GM12878 (cell line): ENCODE measurements at regions of chr10 and their contacts with region 1.

Region 1: DNA sequence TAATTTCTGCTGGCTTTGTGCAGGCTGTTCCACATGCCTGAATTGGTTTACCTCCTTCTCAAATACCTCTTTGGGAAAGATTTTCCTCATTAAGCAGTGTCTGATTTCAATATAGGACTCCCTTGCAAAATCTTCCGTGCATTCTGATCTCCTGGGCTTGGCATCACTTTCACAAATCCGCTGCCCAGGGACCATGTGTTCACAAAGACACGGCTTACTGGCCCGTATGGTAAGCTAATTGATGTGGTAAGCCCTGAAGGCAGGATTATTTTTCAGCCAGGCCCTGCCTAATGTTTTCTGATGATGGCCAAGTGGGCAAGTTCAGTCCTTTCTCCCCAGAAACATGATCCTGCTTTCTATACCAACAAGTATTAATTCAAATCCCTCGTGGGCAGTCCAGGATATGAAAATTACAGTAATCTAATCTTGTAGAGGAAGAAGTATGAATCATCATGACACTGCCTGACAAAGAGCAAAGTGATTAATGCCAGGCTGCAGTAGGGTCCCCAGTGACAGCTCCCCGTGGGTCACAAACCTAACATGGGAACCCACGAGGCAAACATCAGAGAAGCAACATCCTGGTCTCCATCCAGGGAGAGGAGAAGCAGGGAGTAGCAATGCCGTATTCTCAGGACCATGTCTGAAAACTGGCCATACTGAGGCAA is 11.6 kb upstream of the SVIL start:
- DNase-seq: no peak
- ATAC-seq: peak; percentile 23
- H3K4me3 ChIP-seq: no peak overlapping the region
- H3K27ac ChIP-seq: no peak overlapping the region
- H3K4me1 ChIP-seq: no peaks in the 10 kb centered on the region
- H3K27me3 ChIP-seq: no peaks in the 10 kb centered on the region
- CTCF ChIP-seq: no peak
- EP300 ChIP-seq: no peak
- POLR2A ChIP-seq: no peak
- RAD21 ChIP-seq: no peak

Region 2: GRCh38 chr10:29627201-29628141 is 18.9 kb before region 1 on chr10:
- CTCF ChIA-PET with region 1: interaction called, 3 read pairs
- POLR2A ChIA-PET with region 1: interaction called, 6 read pairs
- RAD21 ChIA-PET with region 1: interaction called, 5 read pairs
- SMC1A ChIA-PET with region 1: interaction called, 15 read pairs
- in situ Hi-C with region 1: no loop called
- intact Hi-C with region 1: no loop called
- DNase-seq: no peak
- ATAC-seq: no peak
- H3K4me3 ChIP-seq: no peak overlapping the region
- H3K27ac ChIP-seq: no peak overlapping the region
- H3K4me1 ChIP-seq: no peaks in the 10 kb centered on the region
- H3K27me3 ChIP-seq: no peaks in the 10 kb centered on the region
- CTCF ChIP-seq: no peak
- EP300 ChIP-seq: no peak
- POLR2A ChIP-seq: no peak
- RAD21 ChIP-seq: no peak

Region 3: DNA sequence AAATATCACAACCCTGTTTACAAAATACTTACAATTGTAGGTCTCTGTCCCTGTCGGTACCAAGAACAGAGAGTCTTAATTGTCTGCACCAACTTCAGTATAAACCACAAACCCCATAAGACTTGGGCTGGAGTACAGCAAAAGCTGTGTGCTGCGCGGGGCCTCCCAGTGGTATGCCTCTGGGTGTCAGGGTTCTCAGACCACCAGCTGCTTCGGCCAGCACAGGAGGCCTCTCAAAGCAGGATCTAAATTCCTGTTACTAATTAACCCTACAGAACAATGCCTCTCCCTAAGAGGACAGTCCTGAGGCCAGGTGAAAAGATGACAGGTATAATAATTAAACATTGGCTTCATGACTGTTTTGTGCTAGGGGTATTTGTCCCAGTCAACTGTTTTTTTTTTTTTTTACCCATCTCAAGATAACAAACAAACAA is 10.6 kb before region 1 on chr10:
- CTCF ChIA-PET with region 1: interaction called, 5 read pairs
- POLR2A ChIA-PET with region 1: interaction called, 11 read pairs
- RAD21 ChIA-PET with region 1: interaction called, 8 read pairs
- SMC1A ChIA-PET with region 1: interaction called, 12 read pairs
- in situ Hi-C with region 1: no loop called
- intact Hi-C with region 1: no loop called
- DNase-seq: peak; percentile 27
- ATAC-seq: peak; percentile 86
- H3K4me3 ChIP-seq: no peak overlapping the region
- H3K27ac ChIP-seq: no peak overlapping the region
- H3K4me1 ChIP-seq: no peaks in the 10 kb centered on the region
- H3K27me3 ChIP-seq: no peaks in the 10 kb centered on the region
- CTCF ChIP-seq: no peak
- EP300 ChIP-seq: no peak
- POLR2A ChIP-seq: no peak
- RAD21 ChIP-seq: no peak

Region 4: GRCh38 chr10:29658984-29659965 is 12.9 kb after region 1 on chr10:
- CTCF ChIA-PET with region 1: interaction called, 6 read pairs
- POLR2A ChIA-PET with region 1: interaction called, 7 read pairs
- RAD21 ChIA-PET with region 1: interaction called, 4 read pairs
- SMC1A ChIA-PET with region 1: interaction called, 18 read pairs
- in situ Hi-C with region 1: no loop called
- intact Hi-C with region 1: no loop called
- DNase-seq: peak; percentile 92
- ATAC-seq: peak; percentile 97
- H3K4me3 ChIP-seq: no peak overlapping the region
- H3K27ac ChIP-seq: no peak overlapping the region
- H3K4me1 ChIP-seq: no peaks in the 10 kb centered on the region
- H3K27me3 ChIP-seq: no peaks in the 10 kb centered on the region
- CTCF ChIP-seq: no peak
- EP300 ChIP-seq: peak; percentile 88 to 97; a peak in 3 of 4 replicates
- POLR2A ChIP-seq: no peak
- RAD21 ChIP-seq: no peak

Region 5: DNA sequence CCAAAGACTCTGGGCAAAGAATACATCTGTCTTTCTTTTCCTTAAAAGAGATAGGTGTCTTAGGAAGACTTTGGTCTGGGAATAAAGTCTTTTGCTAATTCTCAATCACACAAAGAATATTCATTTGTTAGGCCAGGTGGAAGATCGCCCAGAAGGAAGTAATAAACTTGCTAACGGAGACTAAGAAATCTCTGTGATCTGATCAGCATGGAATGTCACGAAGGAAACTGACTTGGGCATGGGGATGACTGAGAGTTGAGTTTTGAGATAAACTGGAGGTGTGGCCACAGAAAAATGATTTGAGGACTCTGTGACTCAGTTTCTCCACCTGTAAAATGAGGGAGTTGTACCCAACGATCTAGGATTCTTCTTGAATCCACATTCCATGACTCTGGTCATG is 149.5 kb after region 1 on chr10:
- CTCF ChIA-PET with region 1: no interaction called
- POLR2A ChIA-PET with region 1: no interaction called
- RAD21 ChIA-PET with region 1: no interaction called
- SMC1A ChIA-PET with region 1: no interaction called
- in situ Hi-C with region 1: no loop called
- intact Hi-C with region 1: no loop called
- DNase-seq: no peak
- ATAC-seq: no peak
- H3K4me3 ChIP-seq: no peak overlapping the region
- H3K27ac ChIP-seq: no peak overlapping the region
- H3K4me1 ChIP-seq: no peaks in the 10 kb centered on the region
- H3K27me3 ChIP-seq: no peaks in the 10 kb centered on the region
- CTCF ChIP-seq: no peak
- EP300 ChIP-seq: no peak
- POLR2A ChIP-seq: no peak
- RAD21 ChIP-seq: no peak